Caco-2 (cell line): ENCODE measurements at regions of chr4 and their contacts with region 1.

Region 1: GRCh38 chr4:111641955-111642579 is 503.2 kb upstream of the FAM241A start:
- DNase-seq: peak; percentile 73 to 79
- H3K4me3 ChIP-seq: no peak overlapping the region
- H3K4me3 Mint-ChIP-seq: no peak overlapping the region
- H3K27ac Mint-ChIP-seq: no peak overlapping the region
- H3K4me1 ChIP-seq: peaks cover 7% of the 10 kb centered on the region
- H3K4me1 Mint-ChIP-seq: peaks cover 13% of the 10 kb centered on the region
- H3K27me3 ChIP-seq: no peaks in the 10 kb centered on the region
- H3K27me3 Mint-ChIP-seq: peaks cover 4% of the 10 kb centered on the region
- CTCF ChIP-seq: peak; percentile 78 to 83

Region 2: DNA sequence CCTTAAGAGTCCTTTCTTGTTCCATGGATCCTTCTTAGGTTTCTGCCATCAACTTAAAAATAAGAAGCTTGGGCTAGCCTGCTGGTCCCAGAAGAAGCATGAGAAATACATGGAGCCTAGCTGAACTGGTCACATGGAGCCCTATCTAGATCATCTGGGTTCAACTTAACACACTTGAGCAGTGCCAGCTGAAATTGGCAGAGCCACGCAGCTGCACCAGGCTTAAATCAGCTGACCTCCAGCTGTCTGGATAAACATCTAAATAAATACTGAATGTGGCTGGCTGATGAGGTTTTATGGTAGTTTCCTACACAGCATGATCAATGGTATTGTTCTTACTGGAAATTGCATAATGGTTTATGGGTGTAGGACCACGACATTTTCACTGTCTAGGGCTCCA is 95.2 kb before region 1 on chr4:
- CTCF ChIA-PET with region 1: no interaction called
- POLR2A ChIA-PET with region 1: no interaction called
- intact Hi-C with region 1: no loop called
- DNase-seq: no peak
- H3K4me3 ChIP-seq: no peak overlapping the region
- H3K4me3 Mint-ChIP-seq: no peak overlapping the region
- H3K27ac Mint-ChIP-seq: no peak overlapping the region
- H3K4me1 ChIP-seq: no peaks in the 10 kb centered on the region
- H3K4me1 Mint-ChIP-seq: no peaks in the 10 kb centered on the region
- H3K27me3 ChIP-seq: no peaks in the 10 kb centered on the region
- H3K27me3 Mint-ChIP-seq: peaks cover 4% of the 10 kb centered on the region
- CTCF ChIP-seq: no peak

Region 3: GRCh38 chr4:111778543-111778942 is 136.5 kb after region 1 on chr4:
- CTCF ChIA-PET with region 1: no interaction called
- POLR2A ChIA-PET with region 1: no interaction called
- intact Hi-C with region 1: loop called (anchors 1 kb)
- DNase-seq: no peak
- H3K4me3 ChIP-seq: no peak overlapping the region
- H3K4me3 Mint-ChIP-seq: no peak overlapping the region
- H3K27ac Mint-ChIP-seq: no peak overlapping the region
- H3K4me1 ChIP-seq: no peaks in the 10 kb centered on the region
- H3K4me1 Mint-ChIP-seq: no peaks in the 10 kb centered on the region
- H3K27me3 ChIP-seq: no peaks in the 10 kb centered on the region
- H3K27me3 Mint-ChIP-seq: peaks cover 2% of the 10 kb centered on the region
- CTCF ChIP-seq: peak in 1 of 2 experiments; percentile 28

Region 4: DNA sequence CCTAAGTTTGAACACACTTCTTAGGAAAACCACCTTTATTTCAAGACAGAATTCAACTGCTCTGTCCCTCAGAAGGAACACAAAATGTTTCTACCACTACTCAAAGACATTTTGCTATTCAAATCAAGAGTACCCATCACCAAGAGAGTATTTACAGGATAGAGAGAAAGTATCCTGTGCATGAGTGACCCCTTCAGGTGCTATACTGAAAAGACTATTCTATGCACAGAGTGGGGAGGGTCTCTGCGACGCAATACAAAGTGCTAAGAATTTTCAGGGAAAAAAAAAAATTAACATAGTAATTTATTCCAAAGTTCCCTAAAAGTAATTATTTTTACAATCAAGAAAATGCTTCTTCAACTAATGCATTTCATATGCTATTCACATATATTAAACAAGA is 156.8 kb after region 1 on chr4:
- CTCF ChIA-PET with region 1: no interaction called
- POLR2A ChIA-PET with region 1: no interaction called
- intact Hi-C with region 1: loop called (anchors 1 kb)
- DNase-seq: no peak
- H3K4me3 ChIP-seq: no peak overlapping the region
- H3K4me3 Mint-ChIP-seq: no peak overlapping the region
- H3K27ac Mint-ChIP-seq: no peak overlapping the region
- H3K4me1 ChIP-seq: peaks cover 8% of the 10 kb centered on the region; the same call in 1 of the 2 replicates
- H3K4me1 Mint-ChIP-seq: no peaks in the 10 kb centered on the region
- H3K27me3 ChIP-seq: no peaks in the 10 kb centered on the region
- H3K27me3 Mint-ChIP-seq: peaks cover 4% of the 10 kb centered on the region
- CTCF ChIP-seq: peak in 1 of 2 experiments; percentile 27

Region 5: DNA sequence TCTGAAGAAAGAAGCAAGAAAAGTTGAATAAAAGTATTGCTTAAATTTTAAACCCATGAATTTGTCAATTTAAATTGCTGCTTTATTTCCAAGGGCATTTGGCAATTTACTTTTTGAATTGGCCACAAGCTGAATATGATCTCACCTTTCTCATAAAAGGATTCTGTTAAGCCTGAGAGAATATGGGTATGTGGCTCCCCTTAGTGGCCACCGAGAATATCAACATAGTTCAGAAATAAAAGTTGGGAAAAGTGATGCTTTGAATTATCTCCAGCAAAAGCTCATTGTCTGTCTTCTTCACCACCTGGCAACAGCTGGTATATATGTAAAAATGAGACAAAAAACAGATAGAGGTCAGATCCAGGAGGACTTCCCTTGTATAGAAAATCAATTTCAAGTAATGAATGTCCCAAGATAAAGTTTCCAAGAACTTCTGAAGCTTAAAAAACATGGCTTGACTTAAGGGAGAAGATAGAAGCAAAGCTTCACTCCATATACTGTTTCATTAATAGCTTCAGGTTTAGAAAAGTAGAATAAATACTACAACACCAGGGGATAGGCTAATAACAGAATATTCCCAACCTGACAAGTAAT is 212.5 kb after region 1 on chr4:
- CTCF ChIA-PET with region 1: interaction called, 8 read pairs
- POLR2A ChIA-PET with region 1: no interaction called
- intact Hi-C with region 1: loop called (anchors 1 kb)
- DNase-seq: peak in 1 of 2 experiments; percentile 36
- H3K4me3 ChIP-seq: no peak overlapping the region
- H3K4me3 Mint-ChIP-seq: no peak overlapping the region
- H3K27ac Mint-ChIP-seq: no peak overlapping the region
- H3K4me1 ChIP-seq: no peaks in the 10 kb centered on the region
- H3K4me1 Mint-ChIP-seq: no peaks in the 10 kb centered on the region
- H3K27me3 ChIP-seq: no peaks in the 10 kb centered on the region
- H3K27me3 Mint-ChIP-seq: no peaks in the 10 kb centered on the region
- CTCF ChIP-seq: peak; percentile 52 to 54

Region 6: GRCh38 chr4:111937368-111937767 is 295.3 kb after region 1 on chr4:
- CTCF ChIA-PET with region 1: no interaction called
- POLR2A ChIA-PET with region 1: no interaction called
- intact Hi-C with region 1: loop called (anchors 1 kb)
- DNase-seq: peak in 1 of 2 experiments; percentile 22
- H3K4me3 ChIP-seq: no peak overlapping the region
- H3K4me3 Mint-ChIP-seq: no peak overlapping the region
- H3K27ac Mint-ChIP-seq: no peak overlapping the region
- H3K4me1 ChIP-seq: no peaks in the 10 kb centered on the region
- H3K4me1 Mint-ChIP-seq: no peaks in the 10 kb centered on the region
- H3K27me3 ChIP-seq: no peaks in the 10 kb centered on the region
- H3K27me3 Mint-ChIP-seq: peaks cover 3% of the 10 kb centered on the region
- CTCF ChIP-seq: peak in 1 of 2 experiments; percentile 15

Region 7: GRCh38 chr4:112031712-112032328 is 389.8 kb after region 1 on chr4:
- CTCF ChIA-PET with region 1: no interaction called
- POLR2A ChIA-PET with region 1: no interaction called
- intact Hi-C with region 1: loop called (anchors 1 kb)
- DNase-seq: peak in 1 of 2 experiments; percentile 48
- H3K4me3 ChIP-seq: no peak overlapping the region
- H3K4me3 Mint-ChIP-seq: no peak overlapping the region
- H3K27ac Mint-ChIP-seq: no peak overlapping the region
- H3K4me1 ChIP-seq: no peaks in the 10 kb centered on the region
- H3K4me1 Mint-ChIP-seq: no peaks in the 10 kb centered on the region
- H3K27me3 ChIP-seq: no peaks in the 10 kb centered on the region
- H3K27me3 Mint-ChIP-seq: peaks cover 6% of the 10 kb centered on the region
- CTCF ChIP-seq: peak; percentile 49 to 56